T47D (cell line): ENCODE measurements at regions of chr11 and their contacts with region 1.

Region 1: GRCh38 chr11:9748361-9748970 is 84.6 kb downstream of the SWAP70 start:
- DNase-seq: peak; percentile 44 to 90

Region 2: GRCh38 chr11:9575260-9576240 is 172.9 kb before region 1 on chr11:
- in situ Hi-C with region 1: loop called (anchors 25 kb)
- DNase-seq: peak in 1 of 2 experiments; percentile 84

Region 3: DNA sequence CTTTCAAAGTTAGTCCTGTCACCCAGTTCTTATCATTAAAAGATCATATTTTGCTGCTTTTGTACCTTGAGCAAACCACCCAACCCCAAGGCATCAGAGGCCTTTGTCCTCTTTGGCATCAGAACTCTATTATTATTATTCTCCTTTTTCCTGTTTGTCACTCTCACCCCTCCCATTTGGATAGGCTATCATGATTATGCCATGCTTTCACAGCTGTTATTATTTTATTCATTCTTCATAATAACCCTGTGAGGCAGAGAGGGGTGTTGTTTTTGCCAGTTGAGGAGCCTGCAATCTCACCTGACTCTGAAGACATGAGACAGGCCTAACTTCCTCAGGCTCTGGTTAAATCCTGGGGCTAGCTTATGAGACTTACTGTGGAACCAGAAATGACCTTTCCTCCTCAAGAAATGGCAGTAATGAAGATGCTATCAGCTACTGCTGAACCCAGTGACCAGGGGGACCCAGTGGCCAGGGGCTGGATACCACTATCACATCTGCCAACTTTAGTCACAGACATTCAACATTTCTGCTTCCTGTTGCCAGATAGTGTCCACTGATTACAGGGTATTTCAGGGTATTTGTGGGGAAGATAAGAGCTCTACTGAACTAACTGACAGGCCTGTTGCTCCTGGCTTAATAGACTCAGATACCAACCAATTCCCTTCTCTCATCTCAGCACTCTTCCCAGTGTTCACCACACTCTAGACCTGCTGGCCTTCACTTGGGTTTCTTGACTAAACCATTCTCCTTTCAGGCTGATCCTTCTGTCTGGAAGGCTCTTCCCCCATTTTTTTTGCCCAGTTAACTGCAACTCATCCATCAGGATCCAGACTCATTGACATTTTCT is 96.3 kb before region 1 on chr11:
- in situ Hi-C with region 1: no loop called
- DNase-seq: no peak

Region 4: DNA sequence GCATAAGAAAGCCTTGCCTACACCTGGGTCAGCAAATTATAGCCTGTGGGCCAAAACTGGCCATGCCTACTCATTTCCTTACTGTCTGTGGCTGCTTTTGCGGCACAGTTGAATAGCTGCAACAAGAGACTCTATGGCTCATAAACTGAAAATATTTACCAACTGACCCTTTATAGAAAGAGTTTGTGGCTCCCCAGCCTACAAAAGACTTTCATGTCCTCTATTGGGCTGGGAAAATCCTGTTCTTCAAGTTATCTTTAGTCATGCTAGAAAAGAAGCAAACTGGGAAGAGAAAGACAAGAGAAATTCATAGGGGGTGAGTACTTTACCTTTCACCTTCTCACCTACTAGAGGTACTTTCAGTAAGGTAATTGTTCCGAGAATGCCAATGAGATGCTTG is 90.5 kb after region 1 on chr11:
- in situ Hi-C with region 1: no loop called
- DNase-seq: peak in 1 of 2 experiments; percentile 73